Prostate gland (tissue), 2 donors: ENCODE measurements at regions of chr11 and their contacts with region 1.

Region 1: GRCh38 chr11:111777094-111778046 is 11.2 kb upstream of the PPP2R1B start:
- DNase-seq: peak; percentile 45
- H3K4me3 ChIP-seq: no peak overlapping the region
- H3K27ac ChIP-seq: no peak overlapping the region
- H3K4me1 ChIP-seq: no peaks in the 10 kb centered on the region
- H3K27me3 ChIP-seq: no peaks in the 10 kb centered on the region
- CTCF ChIP-seq: peak; percentile 37 to 89 (median 80)
- POLR2A ChIP-seq: no peak

Region 2: GRCh38 chr11:111586388-111586831 is 191.0 kb before region 1 on chr11:
- intact Hi-C with region 1: loop called (anchors 5 kb)
- DNase-seq: peak; percentile 54
- H3K4me3 ChIP-seq: no peak overlapping the region
- H3K27ac ChIP-seq: no peak overlapping the region
- H3K4me1 ChIP-seq: no peaks in the 10 kb centered on the region
- H3K27me3 ChIP-seq: no peaks in the 10 kb centered on the region
- CTCF ChIP-seq: peak in 3 of 4 experiments; percentile 37 to 64 (median 63)
- POLR2A ChIP-seq: no peak